B cell (primary cell): ENCODE measurements at regions of chr6 and their contacts with region 1.

Region 1: GRCh38 chr6:159104163-159104925 is 59.6 kb upstream of the TAGAP start:
- DNase-seq: peak; percentile 88
- ATAC-seq: peak; percentile 44
- H3K4me3 ChIP-seq: peak overlapping the region in 3 of 5 experiments; percentile 2 to 45 (median 3)
- H3K4me3 Mint-ChIP-seq: peak overlapping the region; percentile 73
- H3K27ac ChIP-seq: peak overlapping the region; percentile 94 to 99
- H3K27ac Mint-ChIP-seq: peak overlapping the region; percentile 98
- H3K4me1 ChIP-seq: peaks cover 76 to 87% of the 10 kb centered on the region in 2 donors
- H3K4me1 Mint-ChIP-seq: peaks cover 90% of the 10 kb centered on the region
- H3K27me3 ChIP-seq: no peaks in the 10 kb centered on the region
- H3K27me3 Mint-ChIP-seq: no peaks in the 10 kb centered on the region
- CTCF ChIP-seq: peak; percentile 93

Region 2: DNA sequence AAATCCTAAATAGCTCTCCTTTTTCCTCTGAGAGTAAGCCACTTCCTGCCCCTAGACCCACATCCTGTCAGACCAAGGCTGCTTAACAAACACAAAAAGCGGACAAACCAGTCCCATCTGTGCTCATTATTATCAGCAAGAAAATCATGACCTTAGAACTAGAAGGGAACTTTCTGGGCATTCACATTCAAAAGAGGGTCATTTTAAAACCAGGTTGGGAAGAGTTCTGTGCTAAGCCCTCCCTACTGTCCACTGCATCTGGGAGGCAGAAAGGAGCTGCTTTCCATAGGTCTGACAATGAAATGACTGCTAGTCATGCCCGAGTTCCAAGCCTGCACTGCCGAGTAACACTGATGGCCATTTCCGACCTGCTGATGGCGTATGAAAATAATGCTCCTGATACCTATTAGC is 300.6 kb before region 1 on chr6:
- CTCF ChIA-PET with region 1: interaction called, 3 read pairs
- POLR2A ChIA-PET with region 1: no interaction called
- intact Hi-C with region 1: loop called (anchors 10 kb)
- DNase-seq: peak; percentile 65
- ATAC-seq: peak; percentile 50
- H3K4me3 ChIP-seq: peak overlapping the region; percentile 21 to 63 (median 40)
- H3K4me3 Mint-ChIP-seq: peak overlapping the region; percentile 73
- H3K27ac ChIP-seq: peak overlapping the region; percentile 80 to 88
- H3K27ac Mint-ChIP-seq: peak overlapping the region; percentile 79
- H3K4me1 ChIP-seq: peaks cover 95% of the 10 kb centered on the region in 2 donors
- H3K4me1 Mint-ChIP-seq: peaks cover 93% of the 10 kb centered on the region
- H3K27me3 ChIP-seq: no peaks in the 10 kb centered on the region
- H3K27me3 Mint-ChIP-seq: no peaks in the 10 kb centered on the region
- CTCF ChIP-seq: no peak

Region 3: DNA sequence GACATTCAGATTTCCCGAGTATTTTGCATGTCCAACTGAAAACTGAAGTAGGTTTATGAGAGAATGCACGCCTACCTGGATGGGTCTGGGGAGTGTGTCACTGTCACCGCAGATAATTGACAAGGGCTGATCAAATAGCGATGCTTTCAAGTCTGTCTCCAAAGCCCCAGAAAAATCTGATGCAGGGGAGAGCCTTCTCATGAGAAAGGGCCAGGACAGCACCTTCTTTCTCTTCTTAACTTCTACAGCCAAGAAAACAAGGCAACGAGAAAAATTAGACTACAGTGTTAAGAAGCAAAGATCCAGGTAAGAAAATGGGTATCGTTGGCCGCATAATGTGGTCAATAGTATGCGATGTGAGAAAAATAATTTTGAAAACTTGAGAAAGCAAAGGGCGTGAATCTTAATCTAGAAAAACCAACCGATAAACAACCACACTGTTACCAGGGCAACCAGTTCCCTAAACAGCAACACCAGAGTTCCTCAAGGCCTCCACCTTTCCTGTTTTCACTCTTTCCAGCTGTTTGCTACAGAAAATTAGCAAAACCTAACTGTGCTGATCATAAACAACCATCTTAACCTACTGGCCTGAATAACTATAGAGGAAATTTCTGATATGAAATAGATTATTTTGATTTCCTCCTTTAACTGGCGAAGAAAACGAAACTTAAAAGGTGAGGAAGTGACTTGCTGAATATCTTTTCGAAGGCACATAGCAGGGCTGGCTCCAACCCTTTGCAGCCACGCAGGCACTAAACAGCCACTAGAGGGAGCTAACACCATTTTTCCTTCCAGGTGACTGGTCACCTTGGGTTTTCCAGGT is 62.1 kb before region 1 on chr6:
- CTCF ChIA-PET with region 1: interaction called, 497 read pairs
- POLR2A ChIA-PET with region 1: interaction called, 60 read pairs
- intact Hi-C with region 1: loop called (anchors 1 kb)
- DNase-seq: peak; percentile 93
- ATAC-seq: peak; percentile 44
- H3K4me3 ChIP-seq: peak overlapping the region; percentile 72 to 100 (median 93)
- H3K4me3 Mint-ChIP-seq: peak overlapping the region; percentile 100
- H3K27ac ChIP-seq: peak overlapping the region; percentile 98 to 99
- H3K27ac Mint-ChIP-seq: peak overlapping the region; percentile 99
- H3K4me1 ChIP-seq: peaks cover 61 to 67% of the 10 kb centered on the region in 2 donors
- H3K4me1 Mint-ChIP-seq: peaks cover 72% of the 10 kb centered on the region
- H3K27me3 ChIP-seq: no peaks in the 10 kb centered on the region
- H3K27me3 Mint-ChIP-seq: no peaks in the 10 kb centered on the region
- CTCF ChIP-seq: peak; percentile 100

Region 4: DNA sequence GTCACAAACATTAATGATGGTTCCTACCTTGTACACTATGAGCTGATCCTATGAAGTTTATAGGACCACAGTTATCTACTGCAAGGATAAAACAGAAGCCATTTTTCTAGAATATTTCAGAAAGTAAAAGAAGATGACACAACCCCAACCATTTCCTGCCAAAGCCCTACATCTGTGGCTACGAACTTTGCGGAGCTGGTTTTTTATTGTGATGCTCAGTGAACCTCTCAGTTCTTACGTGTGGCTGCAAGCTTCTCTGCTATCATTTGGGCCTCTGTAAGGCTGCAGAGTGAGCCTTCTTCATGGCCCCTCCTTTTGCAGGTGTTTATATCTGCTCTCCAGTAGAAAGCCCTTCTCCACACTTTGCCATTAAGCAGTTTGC is 41.8 kb before region 1 on chr6:
- CTCF ChIA-PET with region 1: interaction called, 64 read pairs
- POLR2A ChIA-PET with region 1: interaction called, 17 read pairs
- intact Hi-C with region 1: no loop called
- DNase-seq: peak; percentile 86
- ATAC-seq: peak; percentile 90
- H3K4me3 ChIP-seq: peak overlapping the region in 4 of 5 experiments; percentile 7 to 14 (median 8)
- H3K4me3 Mint-ChIP-seq: peak overlapping the region; percentile 72
- H3K27ac ChIP-seq: peak overlapping the region; percentile 93 to 96
- H3K27ac Mint-ChIP-seq: peak overlapping the region; percentile 98
- H3K4me1 ChIP-seq: peaks cover 48% of the 10 kb centered on the region in 2 donors
- H3K4me1 Mint-ChIP-seq: peaks cover 66% of the 10 kb centered on the region
- H3K27me3 ChIP-seq: no peaks in the 10 kb centered on the region
- H3K27me3 Mint-ChIP-seq: no peaks in the 10 kb centered on the region
- CTCF ChIP-seq: no peak

Region 5: GRCh38 chr6:159090530-159091480 is 13.5 kb before region 1 on chr6:
- CTCF ChIA-PET with region 1: interaction called, 29 read pairs
- POLR2A ChIA-PET with region 1: interaction called, 24 read pairs
- intact Hi-C with region 1: loop called (anchors 1 kb)
- DNase-seq: no peak
- ATAC-seq: no peak
- H3K4me3 ChIP-seq: no peak overlapping the region
- H3K4me3 Mint-ChIP-seq: no peak overlapping the region
- H3K27ac ChIP-seq: no peak overlapping the region
- H3K27ac Mint-ChIP-seq: peak overlapping the region; percentile 70
- H3K4me1 ChIP-seq: peaks cover 22 to 29% of the 10 kb centered on the region in 2 donors
- H3K4me1 Mint-ChIP-seq: peaks cover 42% of the 10 kb centered on the region
- H3K27me3 ChIP-seq: no peaks in the 10 kb centered on the region
- H3K27me3 Mint-ChIP-seq: no peaks in the 10 kb centered on the region
- CTCF ChIP-seq: no peak

Region 6: DNA sequence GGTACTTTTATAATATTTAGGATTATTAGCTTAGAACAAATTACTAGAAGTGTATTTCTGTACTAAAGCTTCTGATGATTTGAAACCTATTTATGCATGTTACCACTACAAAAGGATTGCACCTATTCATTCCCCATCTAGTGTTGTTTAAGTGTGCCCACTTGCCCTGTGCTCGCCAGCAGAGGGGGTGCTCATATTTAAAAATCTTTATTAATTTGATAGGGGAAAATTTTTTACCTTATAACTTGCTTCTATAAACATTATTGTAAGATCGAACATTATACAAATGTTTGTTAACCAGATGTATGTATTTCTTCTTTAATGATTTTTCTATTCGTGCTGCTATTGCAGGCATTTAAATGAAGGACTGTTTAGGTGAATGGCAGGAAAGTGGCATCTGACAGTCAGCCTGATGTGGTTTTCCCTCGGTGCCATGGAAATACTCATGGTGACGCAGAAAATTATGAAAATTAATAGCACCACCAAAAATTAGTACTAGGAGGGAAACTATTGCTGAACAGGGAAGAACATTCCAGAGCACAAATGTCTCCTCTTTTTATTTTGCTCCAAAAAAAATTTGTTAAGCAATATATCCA is 20.8 kb after region 1 on chr6:
- CTCF ChIA-PET with region 1: interaction called, 1,002 read pairs
- POLR2A ChIA-PET with region 1: interaction called, 9 read pairs
- intact Hi-C with region 1: loop called (anchors 1 kb)
- DNase-seq: no peak
- ATAC-seq: no peak
- H3K4me3 ChIP-seq: no peak overlapping the region
- H3K4me3 Mint-ChIP-seq: no peak overlapping the region
- H3K27ac ChIP-seq: no peak overlapping the region
- H3K27ac Mint-ChIP-seq: no peak overlapping the region
- H3K4me1 ChIP-seq: peaks cover 40 to 46% of the 10 kb centered on the region in 2 donors
- H3K4me1 Mint-ChIP-seq: peaks cover 61% of the 10 kb centered on the region
- H3K27me3 ChIP-seq: no peaks in the 10 kb centered on the region
- H3K27me3 Mint-ChIP-seq: no peaks in the 10 kb centered on the region
- CTCF ChIP-seq: peak; percentile 62

Region 7: GRCh38 chr6:159151266-159151855 is 47.0 kb after region 1 on chr6:
- CTCF ChIA-PET with region 1: interaction called, 13 read pairs
- POLR2A ChIA-PET with region 1: interaction called, 3 read pairs
- intact Hi-C with region 1: no loop called
- DNase-seq: peak; percentile 74
- ATAC-seq: peak; percentile 79
- H3K4me3 ChIP-seq: no peak overlapping the region
- H3K4me3 Mint-ChIP-seq: no peak overlapping the region
- H3K27ac ChIP-seq: no peak overlapping the region
- H3K27ac Mint-ChIP-seq: no peak overlapping the region
- H3K4me1 ChIP-seq: peaks cover 3 to 4% of the 10 kb centered on the region in 2 donors
- H3K4me1 Mint-ChIP-seq: peaks cover 3% of the 10 kb centered on the region
- H3K27me3 ChIP-seq: no peaks in the 10 kb centered on the region
- H3K27me3 Mint-ChIP-seq: peaks cover 3% of the 10 kb centered on the region
- CTCF ChIP-seq: peak; percentile 94